CD8-positive, alpha-beta memory T cell (primary cell): ENCODE measurements at regions of chr2 and their contacts with region 1.

Region 1: GRCh38 chr2:106160786-106161261 is 33.3 kb downstream of the UXS1 start:
- DNase-seq: peak in 3 of 5 donors; percentile 53 to 73 (median 55)
- H3K4me3 ChIP-seq: peak overlapping the region; percentile 75
- H3K4me3 Mint-ChIP-seq: peak overlapping the region; percentile 87 to 94 (median 93)
- H3K27ac ChIP-seq: peak overlapping the region; percentile 66
- H3K27ac Mint-ChIP-seq: peak overlapping the region; percentile 90 to 100 (median 98)
- H3K4me1 ChIP-seq: peaks cover 90% of the 10 kb centered on the region
- H3K4me1 Mint-ChIP-seq: peaks cover 81 to 98% (median 97%) of the 10 kb centered on the region in 3 donors
- H3K27me3 ChIP-seq: no peaks in the 10 kb centered on the region
- H3K27me3 Mint-ChIP-seq: no peaks in the 10 kb centered on the region

Region 2: DNA sequence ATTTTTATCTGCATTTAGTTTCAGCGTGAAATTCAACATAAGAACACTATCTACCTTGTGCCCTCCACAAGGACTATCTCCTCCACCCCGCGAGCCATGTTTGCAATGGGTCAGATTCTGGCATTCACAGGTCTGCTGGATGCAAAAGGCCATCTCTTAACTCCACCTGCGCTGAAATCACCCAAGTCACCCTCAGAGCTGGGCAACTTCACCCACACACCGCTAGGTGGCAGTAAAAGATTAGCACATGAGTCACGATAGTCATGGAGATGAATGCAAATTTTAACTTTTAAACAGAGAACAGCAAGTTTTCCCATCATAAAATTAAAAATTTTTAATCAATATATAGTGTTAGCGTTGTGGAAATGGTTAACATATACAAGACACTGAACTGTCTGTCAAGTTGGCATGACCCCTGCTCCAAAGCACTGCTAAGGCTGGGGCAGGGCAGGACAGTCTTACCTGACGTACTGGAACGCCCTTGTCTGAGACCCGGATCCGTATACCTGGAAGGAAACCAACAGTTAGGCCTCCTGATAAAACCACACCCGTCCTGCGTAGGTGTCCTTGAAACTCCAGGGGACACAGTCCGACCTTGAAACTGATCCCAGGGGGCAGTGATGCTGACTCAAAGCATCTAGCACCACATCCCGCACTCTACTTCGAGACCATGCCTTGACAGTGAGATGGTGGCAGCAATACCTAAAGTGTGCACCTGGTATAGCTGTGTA is 56.3 kb before region 1 on chr2:
- CTCF ChIA-PET with region 1: interaction called, 17 read pairs
- POLR2A ChIA-PET with region 1: no interaction called
- DNase-seq: peak; percentile 41 to 80 (median 60)
- H3K4me3 ChIP-seq: no peak overlapping the region
- H3K4me3 Mint-ChIP-seq: no peak overlapping the region
- H3K27ac ChIP-seq: no peak overlapping the region
- H3K27ac Mint-ChIP-seq: peak overlapping the region in 4 of 8 donors; percentile 19 to 88 (median 46)
- H3K4me1 ChIP-seq: no peaks in the 10 kb centered on the region
- H3K4me1 Mint-ChIP-seq: peaks cover 0 to 18% (median 2%) of the 10 kb centered on the region in 3 donors
- H3K27me3 ChIP-seq: no peaks in the 10 kb centered on the region
- H3K27me3 Mint-ChIP-seq: no peaks in the 10 kb centered on the region

Region 3: DNA sequence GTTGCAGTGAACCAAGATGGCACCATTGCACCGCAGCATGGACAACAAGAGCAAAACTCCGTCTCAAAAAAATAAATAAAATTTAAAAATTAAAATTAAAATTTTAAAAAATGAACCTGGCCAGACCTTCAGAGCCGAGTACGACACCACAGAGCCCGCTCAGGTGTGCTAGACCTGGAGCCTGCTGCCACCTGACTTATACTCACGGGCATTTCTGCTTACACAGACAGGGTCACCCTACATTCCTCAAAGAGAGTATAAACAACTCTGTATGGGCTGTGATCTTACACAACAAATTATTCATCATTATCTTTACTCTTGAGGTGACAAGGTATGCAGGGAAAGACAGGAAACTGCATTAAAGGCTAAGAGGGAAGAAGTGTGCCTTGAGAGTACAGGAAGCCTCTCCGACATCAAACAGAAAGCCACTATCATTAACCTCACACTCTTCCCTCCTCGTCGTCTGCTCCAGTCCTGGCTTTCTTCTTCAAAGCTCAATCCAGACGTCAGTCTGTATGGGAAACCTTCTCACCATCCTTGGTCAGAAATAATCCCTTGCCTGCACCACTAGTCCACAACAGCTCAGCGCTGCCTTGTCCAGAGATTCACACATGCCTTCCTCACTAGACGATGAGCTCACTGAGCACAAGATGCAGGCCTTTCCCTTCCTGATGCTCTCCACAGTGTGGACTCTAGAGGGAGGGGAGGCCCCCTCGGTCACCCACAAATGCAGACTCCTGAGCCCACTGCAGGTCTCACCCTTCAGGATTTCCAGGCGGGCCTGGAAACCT is 22.9 kb before region 1 on chr2:
- CTCF ChIA-PET with region 1: interaction called, 21 read pairs
- POLR2A ChIA-PET with region 1: interaction called, 8 read pairs
- DNase-seq: peak in 2 of 5 donors; percentile 34 to 42
- H3K4me3 ChIP-seq: peak overlapping the region; percentile 44
- H3K4me3 Mint-ChIP-seq: peak overlapping the region; percentile 68 to 87 (median 79)
- H3K27ac ChIP-seq: no peak overlapping the region
- H3K27ac Mint-ChIP-seq: peak overlapping the region; percentile 74 to 95 (median 89)
- H3K4me1 ChIP-seq: peaks cover 35% of the 10 kb centered on the region
- H3K4me1 Mint-ChIP-seq: peaks cover 42 to 50% (median 50%) of the 10 kb centered on the region in 3 donors
- H3K27me3 ChIP-seq: no peaks in the 10 kb centered on the region
- H3K27me3 Mint-ChIP-seq: no peaks in the 10 kb centered on the region

Region 4: DNA sequence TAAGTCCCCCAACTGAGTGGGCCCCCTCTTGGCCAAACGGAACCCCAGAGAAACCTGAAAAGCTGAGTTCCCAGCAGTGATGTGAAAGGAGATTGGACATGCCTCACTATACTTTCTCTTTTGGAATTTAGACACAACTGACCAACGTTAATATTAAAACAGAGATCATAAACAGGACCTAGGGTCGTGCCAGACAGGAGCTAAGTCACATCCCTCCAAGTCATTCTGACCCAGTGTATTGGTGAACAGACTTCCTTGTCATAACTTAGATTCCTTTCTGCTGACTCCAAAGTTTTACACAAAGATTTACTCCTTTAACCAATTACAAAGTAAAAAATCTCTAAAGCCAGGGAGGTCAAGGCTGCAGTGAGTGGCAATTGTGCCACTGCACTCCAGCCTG is 13.7 kb before region 1 on chr2:
- CTCF ChIA-PET with region 1: interaction called, 21 read pairs
- POLR2A ChIA-PET with region 1: interaction called, 13 read pairs
- DNase-seq: no peak
- H3K4me3 ChIP-seq: no peak overlapping the region
- H3K4me3 Mint-ChIP-seq: peak overlapping the region in 3 of 7 donors; percentile 41 to 52 (median 50)
- H3K27ac ChIP-seq: no peak overlapping the region
- H3K27ac Mint-ChIP-seq: peak overlapping the region; percentile 29 to 96 (median 82)
- H3K4me1 ChIP-seq: peaks cover 20% of the 10 kb centered on the region
- H3K4me1 Mint-ChIP-seq: peaks cover 63 to 87% (median 82%) of the 10 kb centered on the region in 3 donors
- H3K27me3 ChIP-seq: no peaks in the 10 kb centered on the region
- H3K27me3 Mint-ChIP-seq: no peaks in the 10 kb centered on the region

Region 5: GRCh38 chr2:106193977-106194778 is 33.4 kb after region 1 on chr2 and contains the start of gene UXS1:
- CTCF ChIA-PET with region 1: interaction called, 11 read pairs
- POLR2A ChIA-PET with region 1: interaction called, 19 read pairs
- DNase-seq: peak; percentile 97 to 99 (median 97)
- H3K4me3 ChIP-seq: peak within 1 kb of the TSS; percentile 96
- H3K4me3 Mint-ChIP-seq: peak within 1 kb of the TSS; percentile 91 to 100 (median 95)
- H3K27ac ChIP-seq: peak within 1 kb of the TSS; percentile 77
- H3K27ac Mint-ChIP-seq: peak within 1 kb of the TSS; percentile 76 to 95 (median 92)
- H3K4me1 ChIP-seq: peaks cover 36% of the 10 kb centered on the region
- H3K4me1 Mint-ChIP-seq: peaks cover 39 to 51% (median 46%) of the 10 kb centered on the region in 3 donors
- H3K27me3 ChIP-seq: no peaks in the 10 kb centered on the region
- H3K27me3 Mint-ChIP-seq: peaks cover 0 to 3% of the 10 kb centered on the region in 2 donors
- total RNA-seq, gene UXS1: 47.2 to 51.6 TPM